ENCODE measurements at regions of chr6 and their contacts with region 1.

Region 1: GRCh38 chr6:108541838-108542759 is 18.6 kb upstream of the FOXO3 start:
- DNase-seq: peak; percentile 65
- H3K4me3 ChIP-seq: no peak overlapping the region; a peak in 1 of 4 replicates
- H3K27ac ChIP-seq: peak overlapping the region in 1 of 2 experiments; percentile 34; a peak in 1 of 4 replicates
- H3K4me1 ChIP-seq: peaks cover 0 to 13% of the 10 kb centered on the region in 2 experiments; a peak in 1 of 4 replicates
- H3K27me3 ChIP-seq: no peaks in the 10 kb centered on the region
- CTCF ChIP-seq: peak; percentile 92
- EP300 ChIP-seq: 0 out of 4 replicates have a peak, but pooled peaks of 1 of the 2 experiments have one; percentile 19
- RAD21 ChIP-seq: peak; percentile 99

Region 2: DNA sequence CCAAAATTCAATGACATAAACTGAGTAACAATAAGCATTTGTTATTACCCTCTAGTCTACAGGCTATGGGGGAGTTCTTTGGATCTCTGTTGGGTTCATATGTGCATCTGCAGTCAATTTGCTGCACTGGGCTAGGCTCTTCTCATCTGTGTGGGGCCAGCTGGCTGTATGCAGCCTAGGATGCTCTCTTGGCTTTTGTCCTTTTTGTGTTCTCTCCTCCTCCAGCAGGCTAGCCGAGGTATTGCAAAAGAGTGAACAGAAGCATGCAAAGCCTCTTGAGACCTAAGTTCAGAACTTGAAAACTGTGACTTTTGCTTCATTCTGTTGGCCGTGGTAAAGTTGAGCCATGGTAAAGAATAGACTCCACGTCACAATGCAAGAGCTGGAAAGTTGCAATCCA is 44.2 kb before region 1 on chr6:
- CTCF ChIA-PET with region 1: no interaction called
- POLR2A ChIA-PET with region 1: no interaction called
- DNase-seq: peak; percentile 44
- H3K4me3 ChIP-seq: no peak overlapping the region
- H3K27ac ChIP-seq: no peak overlapping the region
- H3K4me1 ChIP-seq: no peaks in the 10 kb centered on the region
- H3K27me3 ChIP-seq: no peaks in the 10 kb centered on the region
- CTCF ChIP-seq: peak; percentile 54
- EP300 ChIP-seq: no peak
- RAD21 ChIP-seq: peak; percentile 61

Region 3: GRCh38 chr6:108510461-108511319 is 31.4 kb before region 1 on chr6:
- CTCF ChIA-PET with region 1: no interaction called
- POLR2A ChIA-PET with region 1: no interaction called
- DNase-seq: no peak
- H3K4me3 ChIP-seq: no peak overlapping the region
- H3K27ac ChIP-seq: no peak overlapping the region
- H3K4me1 ChIP-seq: no peaks in the 10 kb centered on the region
- H3K27me3 ChIP-seq: no peaks in the 10 kb centered on the region
- CTCF ChIP-seq: no peak
- EP300 ChIP-seq: no peak
- RAD21 ChIP-seq: no peak

Region 4: DNA sequence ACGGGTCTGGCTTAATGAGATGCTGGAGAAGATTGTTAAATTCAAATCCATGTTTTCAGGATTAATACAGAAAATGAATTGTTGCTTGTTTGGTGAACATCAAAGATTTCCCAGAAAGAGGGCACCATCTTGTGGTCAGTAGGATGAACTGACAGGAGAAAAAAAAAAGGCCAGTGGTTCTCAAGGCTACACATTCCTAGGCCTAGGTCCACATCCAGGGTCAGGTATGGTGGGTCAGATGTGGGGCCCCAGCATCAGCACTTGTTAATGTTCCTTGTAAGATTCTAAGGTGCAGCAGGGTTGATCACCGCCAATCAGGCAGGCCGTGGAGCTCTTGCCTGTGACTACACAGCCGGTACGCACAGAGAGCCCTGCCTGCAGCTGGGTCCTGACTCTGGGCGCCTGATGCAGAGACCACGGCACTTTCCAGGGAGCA is 15.3 kb before region 1 on chr6:
- CTCF ChIA-PET with region 1: interaction called, 13 read pairs
- POLR2A ChIA-PET with region 1: no interaction called
- DNase-seq: peak; percentile 64
- H3K4me3 ChIP-seq: no peak overlapping the region; a peak in 1 of 4 replicates
- H3K27ac ChIP-seq: no peak overlapping the region
- H3K4me1 ChIP-seq: no peaks in the 10 kb centered on the region; a peak in 1 of 4 replicates
- H3K27me3 ChIP-seq: no peaks in the 10 kb centered on the region
- CTCF ChIP-seq: peak; percentile 84
- EP300 ChIP-seq: no peak
- RAD21 ChIP-seq: peak; percentile 95

Region 5: DNA sequence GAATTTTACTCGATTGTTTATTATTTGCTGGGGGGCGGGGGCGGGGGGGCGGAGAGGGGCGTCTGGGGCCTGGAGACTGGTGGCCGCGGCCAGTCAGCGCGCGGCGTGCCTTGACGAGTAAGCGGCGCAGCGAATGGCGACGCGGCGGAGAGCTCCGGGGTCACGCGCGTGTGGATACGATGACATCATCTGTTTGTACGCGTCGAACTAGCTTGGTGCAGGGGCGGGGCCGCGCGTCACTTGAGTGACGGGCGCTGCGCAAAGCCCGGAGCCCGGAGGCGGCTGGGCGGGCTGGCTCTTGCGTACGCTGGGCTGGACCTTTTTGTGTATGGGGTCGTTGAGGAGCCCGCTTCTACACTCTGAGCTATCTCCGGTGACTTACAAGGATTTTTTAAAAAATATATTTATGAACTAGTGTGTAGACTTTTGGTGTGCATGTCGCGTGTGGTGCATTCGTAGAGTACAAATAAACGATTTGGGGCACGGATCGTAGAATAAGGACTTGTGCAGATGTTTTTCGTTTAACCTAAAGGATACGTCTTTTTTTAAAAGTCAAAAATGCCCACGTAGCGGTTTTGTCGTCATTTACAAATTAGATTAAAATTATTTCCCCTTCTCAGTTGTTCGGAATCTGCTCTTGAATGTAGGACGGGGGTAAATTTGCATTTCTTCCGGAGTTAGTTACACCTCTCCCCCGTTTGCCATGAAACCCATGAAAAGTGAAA is 16.4 kb after region 1 on chr6:
- CTCF ChIA-PET with region 1: interaction called, 52 read pairs
- POLR2A ChIA-PET with region 1: interaction called, 4 read pairs
- DNase-seq: peak; percentile 89
- H3K4me3 ChIP-seq: peak overlapping the region; percentile 91 to 96
- H3K27ac ChIP-seq: peak overlapping the region; percentile 97 to 98
- H3K4me1 ChIP-seq: peaks cover 0 to 20% of the 10 kb centered on the region in 2 experiments; a peak in 2 of 4 replicates
- H3K27me3 ChIP-seq: no peaks in the 10 kb centered on the region
- CTCF ChIP-seq: no peak
- EP300 ChIP-seq: no peak
- RAD21 ChIP-seq: peak; percentile 29; the same call in 1 of the 2 replicates

Region 6: GRCh38 chr6:108835218-108835850 is 293.2 kb after region 1 on chr6:
- CTCF ChIA-PET with region 1: interaction called, 50 read pairs
- POLR2A ChIA-PET with region 1: no interaction called
- DNase-seq: peak; percentile 89
- H3K4me3 ChIP-seq: no peak overlapping the region; a peak in 1 of 4 replicates
- H3K27ac ChIP-seq: peak overlapping the region in 1 of 2 experiments; percentile 62; a peak in 2 of 4 replicates
- H3K4me1 ChIP-seq: peaks cover 0 to 13% of the 10 kb centered on the region in 2 experiments; a peak in 2 of 4 replicates
- H3K27me3 ChIP-seq: no peaks in the 10 kb centered on the region
- CTCF ChIP-seq: peak; percentile 93
- EP300 ChIP-seq: no peak
- RAD21 ChIP-seq: peak; percentile 91

Measured in SK-N-SH (cell line).